ENCODE measurements at regions of chr13 and their contacts with region 1.

Region 1: GRCh38 chr13:56201834-56202233 is 938.9 kb upstream of the PRR20A start:
- DNase-seq: no peak
- H3K4me3 ChIP-seq: no peak overlapping the region
- H3K27ac ChIP-seq: no peak overlapping the region
- H3K4me1 ChIP-seq: no peaks in the 10 kb centered on the region
- H3K27me3 ChIP-seq: no peaks in the 10 kb centered on the region
- CTCF ChIP-seq: no peak

Region 2: GRCh38 chr13:55160867-55161266 is 1041.0 kb before region 1 on chr13:
- intact Hi-C with region 1: loop called (anchors 5 kb)
- DNase-seq: no peak
- H3K4me3 ChIP-seq: no peak overlapping the region
- H3K27ac ChIP-seq: no peak overlapping the region
- H3K4me1 ChIP-seq: no peaks in the 10 kb centered on the region
- H3K27me3 ChIP-seq: no peaks in the 10 kb centered on the region
- CTCF ChIP-seq: no peak

Region 3: DNA sequence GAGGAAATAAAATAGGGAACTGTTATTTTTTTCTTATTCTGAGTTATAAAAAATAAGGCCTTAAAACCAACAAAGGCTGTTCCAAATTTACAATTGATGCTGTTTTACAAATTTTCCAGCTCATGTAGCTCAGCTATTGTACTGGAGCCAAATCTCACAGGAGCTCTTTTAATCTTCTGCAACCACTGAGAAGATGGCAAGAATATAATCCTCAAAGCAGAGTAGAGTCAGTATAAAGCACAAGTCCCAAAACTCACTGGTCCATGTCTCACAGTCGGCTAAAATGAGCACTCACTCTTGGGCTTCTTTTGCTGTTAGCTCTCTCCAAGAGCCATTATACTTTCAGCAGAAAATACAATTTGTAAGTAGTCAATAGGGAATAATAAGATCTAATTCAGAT is 135.5 kb before region 1 on chr13:
- intact Hi-C with region 1: no loop called
- DNase-seq: no peak
- H3K4me3 ChIP-seq: no peak overlapping the region
- H3K27ac ChIP-seq: no peak overlapping the region
- H3K4me1 ChIP-seq: no peaks in the 10 kb centered on the region
- H3K27me3 ChIP-seq: no peaks in the 10 kb centered on the region
- CTCF ChIP-seq: no peak

Region 4: GRCh38 chr13:56271686-56272085 is 69.9 kb after region 1 on chr13:
- intact Hi-C with region 1: no loop called
- DNase-seq: no peak
- H3K4me3 ChIP-seq: no peak overlapping the region
- H3K27ac ChIP-seq: no peak overlapping the region
- H3K4me1 ChIP-seq: no peaks in the 10 kb centered on the region
- H3K27me3 ChIP-seq: no peaks in the 10 kb centered on the region
- CTCF ChIP-seq: no peak

Region 5: DNA sequence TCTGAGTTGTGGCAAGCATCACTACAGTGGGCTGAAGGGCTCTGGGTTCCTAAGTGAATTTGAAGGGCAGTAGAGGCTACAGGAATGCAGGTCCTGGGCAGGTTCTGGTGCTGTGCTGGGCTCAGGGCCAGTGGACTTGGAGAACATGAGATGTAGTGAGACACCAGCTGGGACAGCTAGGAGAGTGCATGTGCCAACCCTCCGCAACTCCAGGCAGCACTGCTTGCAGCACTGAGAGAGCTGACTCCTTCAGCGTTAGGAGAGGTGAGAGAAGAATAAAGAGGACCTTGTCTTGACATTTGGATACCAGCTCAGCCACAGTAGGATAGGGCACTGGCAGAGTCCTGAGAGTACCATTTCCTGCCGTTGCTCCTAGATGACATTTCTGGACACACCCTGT is 198.9 kb after region 1 on chr13:
- intact Hi-C with region 1: no loop called
- DNase-seq: no peak
- H3K4me3 ChIP-seq: no peak overlapping the region
- H3K27ac ChIP-seq: no peak overlapping the region
- H3K4me1 ChIP-seq: no peaks in the 10 kb centered on the region
- H3K27me3 ChIP-seq: no peaks in the 10 kb centered on the region
- CTCF ChIP-seq: no peak

Measured in ascending aorta (tissue), 2 donors.